ENCODE measurements at regions of chr2 and their contacts with region 1.

Region 1: DNA sequence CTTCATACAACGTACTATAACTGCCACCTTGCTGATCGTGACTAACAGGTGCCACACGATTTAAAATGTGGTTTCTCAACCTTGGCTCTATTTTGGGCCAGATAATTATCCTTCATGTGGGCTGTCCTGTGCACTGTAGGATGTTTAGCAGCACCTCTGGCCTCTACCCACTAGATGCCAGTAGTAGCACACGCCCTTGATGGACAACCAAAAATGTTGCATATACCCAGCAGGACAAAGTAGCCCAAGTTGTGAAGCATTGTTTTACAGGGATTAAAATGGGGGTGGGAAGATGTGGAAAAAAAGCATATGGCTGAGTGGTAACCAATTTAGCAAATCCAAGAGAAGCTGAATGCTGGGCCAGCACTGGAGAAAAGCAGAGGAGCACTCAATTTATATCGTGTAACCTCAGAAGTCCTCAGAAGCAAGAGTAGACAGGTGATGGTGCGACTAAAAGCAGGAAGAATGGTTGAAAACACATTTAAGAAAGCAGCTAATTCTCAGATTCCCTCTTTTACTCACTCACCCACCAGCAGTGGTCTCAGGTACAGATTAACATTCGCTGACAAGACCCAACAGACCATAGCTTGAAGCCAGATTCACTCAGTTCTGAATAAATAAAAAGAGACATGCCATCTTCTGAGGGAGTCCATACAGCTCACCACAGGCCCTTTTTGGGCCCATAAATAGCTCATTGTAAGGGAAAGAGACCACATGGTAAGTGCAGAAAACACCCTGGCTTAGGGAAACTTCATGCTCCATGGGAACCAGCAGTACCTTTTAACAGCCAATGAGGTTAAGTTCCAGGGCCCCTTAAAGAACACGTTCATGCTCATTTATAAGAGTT is 50.6 kb downstream of the RAPH1 start:
- DNase-seq: no peak
- ATAC-seq: peak; percentile 84 to 97 (median 88)
- H3K4me3 ChIP-seq: no peak overlapping the region
- H3K27ac ChIP-seq: no peak overlapping the region
- H3K4me1 ChIP-seq: no peaks in the 10 kb centered on the region
- H3K27me3 ChIP-seq: no peaks in the 10 kb centered on the region
- CTCF ChIP-seq: peak; percentile 72

Region 2: GRCh38 chr2:203650860-203651613 is 166.5 kb after region 1 on chr2:
- intact Hi-C with region 1: loop called (anchors 2 to 5 kb)
- DNase-seq: no peak
- ATAC-seq: peak; percentile 86 to 91 (median 88)
- H3K4me3 ChIP-seq: no peak overlapping the region
- H3K27ac ChIP-seq: peak overlapping the region; percentile 1
- H3K4me1 ChIP-seq: peaks cover 27% of the 10 kb centered on the region
- H3K27me3 ChIP-seq: peaks cover 0 to 2% (median 0%) of the 10 kb centered on the region in 3 donors
- CTCF ChIP-seq: peak; percentile 43

Region 3: GRCh38 chr2:203909261-203909967 is 424.9 kb after region 1 on chr2:
- intact Hi-C with region 1: loop called (anchors 2 to 5 kb)
- DNase-seq: no peak
- ATAC-seq: peak; percentile 70 to 87 (median 76)
- H3K4me3 ChIP-seq: peak overlapping the region; percentile 45
- H3K27ac ChIP-seq: peak overlapping the region; percentile 27
- H3K4me1 ChIP-seq: peaks cover 11% of the 10 kb centered on the region
- H3K27me3 ChIP-seq: no peaks in the 10 kb centered on the region
- CTCF ChIP-seq: peak; percentile 85

Measured in psoas muscle (tissue), 8 donors.